Panc1 (cell line): ENCODE measurements at regions of chr3 and their contacts with region 1.

Region 1: DNA sequence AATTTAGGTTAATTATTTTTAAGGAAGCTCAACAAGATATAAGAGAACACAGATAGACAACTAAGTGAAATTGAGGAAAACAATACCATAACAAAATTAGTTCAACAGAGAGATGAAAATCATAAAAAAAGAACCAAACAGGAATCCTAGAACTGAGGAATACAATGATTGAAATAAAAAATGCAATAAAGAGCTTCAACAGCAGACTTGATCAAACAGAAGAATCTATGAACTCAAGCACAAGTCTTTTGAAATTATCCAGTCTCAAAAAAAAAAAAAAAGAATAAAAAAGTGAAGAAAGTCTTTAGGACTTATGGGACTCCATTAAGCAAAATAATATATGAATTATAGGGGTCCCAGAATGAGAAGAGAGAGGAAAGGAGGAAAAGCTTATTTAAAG is 42.0 kb upstream of the GNB4 start:
- DNase-seq: no peak
- ATAC-seq: no peak
- H3K4me3 ChIP-seq: no peak overlapping the region
- H3K27ac ChIP-seq: no peak overlapping the region
- H3K4me1 ChIP-seq: no peaks in the 10 kb centered on the region
- H3K27me3 ChIP-seq: no peaks in the 10 kb centered on the region
- CTCF ChIP-seq: no peak

Region 2: GRCh38 chr3:179196700-179197099 is 296.6 kb before region 1 on chr3:
- CTCF ChIA-PET with region 1: no interaction called
- POLR2A ChIA-PET with region 1: no interaction called
- in situ Hi-C with region 1: no loop called
- intact Hi-C with region 1: no loop called
- DNase-seq: no peak
- ATAC-seq: no peak
- H3K4me3 ChIP-seq: no peak overlapping the region
- H3K27ac ChIP-seq: no peak overlapping the region
- H3K4me1 ChIP-seq: no peaks in the 10 kb centered on the region; the same call in 1 of the 2 replicates
- H3K27me3 ChIP-seq: no peaks in the 10 kb centered on the region
- CTCF ChIP-seq: no peak

Region 3: DNA sequence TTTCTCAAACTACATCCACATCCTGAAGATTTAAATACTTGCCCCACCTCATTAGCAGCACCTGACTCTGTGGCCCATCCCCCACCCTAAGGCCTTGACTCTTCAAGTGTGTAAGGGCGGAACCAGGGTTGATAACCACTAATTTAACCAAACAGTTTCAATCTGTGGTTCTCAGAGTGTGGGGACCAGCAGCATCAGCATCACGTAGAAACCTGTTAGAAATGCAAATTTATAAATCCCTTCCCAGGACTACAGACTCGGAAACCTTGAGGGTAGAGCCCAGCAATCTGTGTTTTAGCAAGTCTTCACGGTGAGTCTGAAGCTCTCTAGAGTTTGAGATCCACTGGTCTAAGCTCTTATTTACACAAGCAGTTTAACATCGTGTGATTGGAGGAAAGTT is 54.4 kb before region 1 on chr3:
- CTCF ChIA-PET with region 1: no interaction called
- POLR2A ChIA-PET with region 1: interaction called, 11 read pairs
- in situ Hi-C with region 1: no loop called
- intact Hi-C with region 1: no loop called
- DNase-seq: no peak
- ATAC-seq: no peak
- H3K4me3 ChIP-seq: no peak overlapping the region
- H3K27ac ChIP-seq: no peak overlapping the region
- H3K4me1 ChIP-seq: no peaks in the 10 kb centered on the region
- H3K27me3 ChIP-seq: no peaks in the 10 kb centered on the region
- CTCF ChIP-seq: no peak